HCT116 (cell line): ENCODE measurements at regions of chr1 and their contacts with region 1.

Region 1: GRCh38 chr1:197224160-197224559 is 43.9 kb upstream of the CRB1 start:
- DNase-seq: no peak
- ATAC-seq: no peak
- H3K4me3 ChIP-seq: no peak overlapping the region
- H3K27ac ChIP-seq: no peak overlapping the region
- H3K4me1 ChIP-seq: no peaks in the 10 kb centered on the region
- H3K27me3 ChIP-seq: no peaks in the 10 kb centered on the region
- CTCF ChIP-seq: peak; percentile 6 to 56 (median 17); a peak in 2 of 6 replicates
- POLR2A ChIP-seq: no peak
- RAD21 ChIP-seq: peak; percentile 45; the same call in 1 of the 2 replicates

Region 2: DNA sequence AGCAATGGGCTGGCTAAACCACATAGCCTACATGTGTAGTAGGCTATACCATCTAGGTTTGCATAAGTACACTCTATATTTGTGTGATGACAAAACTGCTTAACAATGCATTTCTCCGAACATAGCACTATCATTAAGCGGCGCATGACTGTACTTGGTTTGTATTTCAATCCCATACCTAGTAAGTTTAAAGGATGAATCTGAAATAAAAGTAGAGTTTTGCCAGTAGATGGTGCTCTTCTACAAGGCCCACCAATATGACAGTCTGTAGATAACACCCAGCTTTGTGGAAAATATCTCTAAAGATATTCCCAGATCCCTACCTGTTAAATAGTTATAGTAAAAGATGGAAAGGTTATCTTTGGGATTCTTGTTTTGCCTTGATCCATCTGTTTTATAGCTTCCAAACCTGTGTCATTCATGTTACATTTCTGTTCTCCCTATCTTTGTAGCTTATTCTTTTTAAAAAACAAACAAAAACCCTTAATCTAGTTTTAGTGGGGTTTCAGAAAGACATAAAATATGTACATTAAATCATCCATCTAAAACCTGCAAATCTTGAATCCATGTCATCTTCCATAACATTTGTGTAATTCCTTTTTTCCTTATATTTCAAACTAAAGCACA is 43.8 kb before region 1 on chr1:
- CTCF ChIA-PET with region 1: interaction called, 11 read pairs
- POLR2A ChIA-PET with region 1: no interaction called
- RAD21 ChIA-PET with region 1: interaction called in 1 of 2 experiments, 4 read pairs
- intact Hi-C with region 1: no loop called
- DNase-seq: no peak
- ATAC-seq: peak; percentile 80
- H3K4me3 ChIP-seq: no peak overlapping the region
- H3K27ac ChIP-seq: no peak overlapping the region
- H3K4me1 ChIP-seq: peaks cover 0 to 6% of the 10 kb centered on the region in 2 experiments; a peak in 2 of 4 replicates
- H3K27me3 ChIP-seq: no peaks in the 10 kb centered on the region
- CTCF ChIP-seq: peak; percentile 50 to 72 (median 59); a peak in 5 of 6 replicates
- POLR2A ChIP-seq: no peak
- RAD21 ChIP-seq: peak; percentile 71